ENCODE measurements at regions of chr19 and their contacts with region 1.

Region 1: GRCh38 chr19:48333467-48334384 is 8.4 kb downstream of the EMP3 start:
- DNase-seq: peak; percentile 97
- ATAC-seq: peak; percentile 76
- H3K4me3 Mint-ChIP-seq: peak overlapping the region; percentile 96
- H3K27ac Mint-ChIP-seq: peak overlapping the region; percentile 93
- H3K4me1 Mint-ChIP-seq: peaks cover 46% of the 10 kb centered on the region
- H3K27me3 Mint-ChIP-seq: no peaks in the 10 kb centered on the region

Region 2: DNA sequence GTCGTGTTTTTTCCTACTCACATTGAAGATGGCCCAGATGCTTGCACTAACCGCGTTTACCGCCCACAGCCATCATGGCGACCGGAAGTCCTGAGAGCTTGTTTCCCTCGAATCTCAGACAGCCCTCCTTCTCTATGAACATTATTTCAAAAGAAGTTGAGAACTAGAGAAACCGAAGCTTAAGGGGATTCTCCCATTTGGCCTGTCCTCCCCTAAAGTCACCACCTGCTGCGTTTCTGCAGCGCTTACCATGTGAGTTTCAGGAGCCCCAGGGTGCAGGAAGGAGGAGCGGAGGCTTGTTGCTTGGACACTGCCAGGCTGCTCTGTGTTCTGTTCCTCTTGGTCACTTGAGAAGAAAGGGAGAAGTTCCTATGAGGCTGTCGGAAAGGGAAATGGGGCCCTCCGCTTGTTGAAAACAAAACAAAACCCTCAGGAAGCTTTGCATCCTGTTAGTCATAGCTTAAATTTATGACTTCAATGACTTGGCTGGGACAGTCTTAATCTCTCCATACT is 84.2 kb before region 1 on chr19:
- CTCF ChIA-PET with region 1: interaction called, 11 read pairs
- DNase-seq: peak; percentile 90
- ATAC-seq: peak; percentile 75
- H3K4me3 Mint-ChIP-seq: peak overlapping the region; percentile 87
- H3K27ac Mint-ChIP-seq: peak overlapping the region; percentile 98
- H3K4me1 Mint-ChIP-seq: peaks cover 73% of the 10 kb centered on the region
- H3K27me3 Mint-ChIP-seq: no peaks in the 10 kb centered on the region

Region 3: DNA sequence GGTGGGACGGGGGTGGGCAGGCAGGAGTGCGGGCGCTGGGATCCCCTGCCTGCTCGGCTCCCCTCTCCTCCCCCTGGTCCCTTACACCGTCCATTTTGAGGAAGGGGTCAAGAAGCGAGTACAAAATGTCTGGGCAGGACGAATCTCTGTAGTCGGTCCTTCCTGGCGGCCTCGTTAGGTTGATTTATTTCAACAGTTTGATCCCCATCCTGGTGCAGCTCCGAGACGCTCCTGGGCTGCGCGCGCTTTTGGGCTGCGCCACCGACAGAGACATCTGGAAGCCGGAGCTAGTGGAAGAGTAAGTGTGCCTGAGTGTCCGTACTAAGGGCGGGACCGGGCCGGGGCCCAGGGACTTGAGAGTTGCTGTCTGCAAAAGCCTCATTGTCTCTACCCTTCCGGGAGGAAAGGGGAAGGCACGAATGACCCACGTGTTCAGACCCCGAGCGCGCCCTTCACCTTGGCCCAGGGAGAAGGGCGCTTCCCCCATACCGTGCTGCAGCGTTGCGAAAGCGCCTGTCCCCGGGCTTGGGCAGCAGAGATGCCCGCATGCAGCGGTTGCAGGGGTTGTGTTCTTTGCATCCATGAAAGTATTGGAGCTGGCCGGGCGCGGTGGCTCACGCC is 62.1 kb before region 1 on chr19:
- CTCF ChIA-PET with region 1: interaction called, 31 read pairs
- DNase-seq: peak; percentile 45
- ATAC-seq: peak; percentile 51
- H3K4me3 Mint-ChIP-seq: peak overlapping the region; percentile 72
- H3K27ac Mint-ChIP-seq: no peak overlapping the region
- H3K4me1 Mint-ChIP-seq: peaks cover 11% of the 10 kb centered on the region
- H3K27me3 Mint-ChIP-seq: peaks cover 30% of the 10 kb centered on the region

Region 4: DNA sequence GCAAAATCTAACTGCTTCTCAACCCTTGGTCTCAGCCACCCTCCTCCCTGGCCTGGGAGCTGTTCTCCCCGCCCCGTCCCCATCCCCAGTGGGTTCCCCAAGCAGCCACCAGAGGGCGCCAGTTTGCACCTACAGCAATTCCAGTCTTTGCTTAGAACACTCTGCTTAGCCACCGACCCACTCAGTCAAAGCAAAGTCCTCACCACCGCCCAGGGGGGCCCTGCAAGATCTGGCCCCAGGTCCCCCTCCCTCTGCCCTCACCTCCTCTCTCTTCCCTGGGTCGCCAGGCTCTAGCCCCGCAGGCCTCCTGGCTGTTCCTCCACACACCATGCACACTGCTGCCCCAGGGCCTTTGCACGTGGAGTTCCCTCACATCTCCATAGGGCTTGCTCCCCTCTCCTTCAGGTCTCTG is 17.6 kb after region 1 on chr19:
- CTCF ChIA-PET with region 1: interaction called, 14 read pairs
- DNase-seq: peak; percentile 89
- ATAC-seq: peak; percentile 95
- H3K4me3 Mint-ChIP-seq: no peak overlapping the region
- H3K27ac Mint-ChIP-seq: no peak overlapping the region
- H3K4me1 Mint-ChIP-seq: peaks cover 9% of the 10 kb centered on the region
- H3K27me3 Mint-ChIP-seq: no peaks in the 10 kb centered on the region

Region 5: GRCh38 chr19:48391107-48391986 is 57.6 kb after region 1 on chr19 and contains the start of gene KDELR1:
- CTCF ChIA-PET with region 1: interaction called, 37 read pairs
- DNase-seq: peak; percentile 77
- ATAC-seq: peak; percentile 79
- H3K4me3 Mint-ChIP-seq: peak within 1 kb of the TSS; percentile 93
- H3K27ac Mint-ChIP-seq: peak within 1 kb of the TSS; percentile 92
- H3K4me1 Mint-ChIP-seq: peaks cover 21% of the 10 kb centered on the region
- H3K27me3 Mint-ChIP-seq: peaks cover 32% of the 10 kb centered on the region
- total RNA-seq, gene KDELR1: 64.8 to 72.2 TPM